Kidney (tissue), 22 donors: ENCODE measurements at regions of chr11 and their contacts with region 1.

Region 1: DNA sequence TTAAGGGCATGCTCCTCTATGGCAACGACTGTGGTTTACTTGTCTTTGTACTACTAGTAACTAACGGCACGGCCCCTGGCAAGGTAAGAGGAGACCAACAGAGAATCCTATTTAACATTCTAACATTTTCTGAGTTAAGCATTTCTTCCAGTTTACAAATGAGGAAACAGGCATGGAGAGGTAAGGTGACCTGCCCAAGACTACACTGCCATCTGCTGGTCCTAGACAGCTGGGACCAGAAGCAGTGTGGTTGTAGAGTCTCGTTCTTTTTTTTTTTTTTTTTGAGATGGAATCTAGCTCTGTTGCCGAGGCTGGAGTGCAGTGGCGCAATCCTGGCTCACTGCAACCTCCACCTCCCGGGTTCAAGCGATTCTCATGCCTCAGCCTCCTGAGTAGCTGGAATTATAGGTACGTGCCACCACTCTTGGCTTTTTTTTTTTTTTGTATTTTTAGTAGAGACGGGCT is 5.3 kb upstream of the RAPSN start:
- DNase-seq: peak; percentile 79 to 94 (median 85)
- H3K4me3 ChIP-seq: no peak overlapping the region
- H3K27ac ChIP-seq: no peak overlapping the region
- H3K4me1 ChIP-seq: no peaks in the 10 kb centered on the region
- H3K27me3 ChIP-seq: no peaks in the 10 kb centered on the region
- CTCF ChIP-seq: peak; percentile 88

Region 2: DNA sequence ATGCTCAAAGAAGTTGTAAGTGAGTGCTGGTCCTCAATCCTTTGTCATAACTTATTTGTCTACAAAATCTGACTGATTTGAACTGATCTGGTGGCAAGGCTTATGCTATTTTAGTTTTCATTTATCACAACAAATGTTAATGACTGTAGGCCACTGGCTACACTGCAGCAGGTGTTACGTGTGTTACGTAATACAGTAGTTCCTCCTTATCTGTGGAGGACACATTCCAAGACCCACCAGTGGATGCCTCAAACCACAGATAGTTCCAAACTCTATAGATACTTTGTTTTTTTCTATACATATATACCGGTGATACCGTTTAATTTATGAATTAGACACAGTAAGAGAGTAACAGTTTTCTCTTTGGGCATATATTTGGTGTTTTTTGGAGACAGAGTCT is 177.3 kb before region 1 on chr11:
- intact Hi-C with region 1: no loop called
- DNase-seq: no peak
- H3K4me3 ChIP-seq: no peak overlapping the region
- H3K27ac ChIP-seq: no peak overlapping the region
- H3K4me1 ChIP-seq: peaks cover 0 to 4% (median under 1%) of the 10 kb centered on the region in 3 donors
- H3K27me3 ChIP-seq: no peaks in the 10 kb centered on the region
- CTCF ChIP-seq: no peak

Region 3: DNA sequence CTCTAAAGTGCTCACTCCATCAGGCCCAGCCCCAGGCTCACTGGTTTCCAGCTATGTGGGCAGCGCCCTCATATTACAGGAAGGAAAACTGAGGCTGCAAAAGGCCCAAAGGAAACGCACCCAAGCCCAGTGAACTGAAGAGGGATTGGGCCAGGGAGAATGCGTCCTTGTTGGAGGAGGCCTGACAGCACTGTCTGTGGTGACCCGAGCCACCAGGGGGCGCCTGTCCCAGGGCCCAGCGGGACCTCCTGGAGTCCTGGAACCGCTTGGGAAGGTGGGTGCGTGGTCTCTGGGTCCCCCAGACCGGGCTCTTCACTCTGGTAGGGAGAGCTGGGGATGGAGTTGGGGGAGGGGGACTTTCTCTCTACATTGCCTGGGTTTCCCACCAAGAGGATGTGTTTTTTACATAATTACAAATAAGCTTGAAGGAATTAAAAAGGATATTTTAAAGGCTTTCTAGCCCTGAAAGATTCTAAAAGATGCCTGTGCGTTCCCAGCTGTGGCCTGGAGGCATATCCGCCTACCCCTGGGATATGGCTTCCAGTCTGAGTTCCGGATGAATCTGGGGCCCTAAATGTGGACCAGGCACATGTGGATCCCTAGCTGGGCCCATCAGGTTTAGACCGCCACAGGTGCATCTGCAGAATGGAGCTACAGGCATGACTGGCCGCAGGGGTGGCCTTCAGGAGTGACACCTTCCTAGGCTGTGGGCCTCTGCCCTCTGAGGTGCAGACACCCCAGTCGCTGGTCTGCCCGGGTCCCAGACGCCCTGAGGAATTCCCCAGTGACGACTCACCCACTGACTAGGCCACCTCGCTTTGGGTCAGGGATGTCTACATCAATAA is 80.1 kb before region 1 on chr11:
- intact Hi-C with region 1: loop called (anchors 10 kb)
- DNase-seq: peak; percentile 76 to 90 (median 84)
- H3K4me3 ChIP-seq: no peak overlapping the region
- H3K27ac ChIP-seq: no peak overlapping the region
- H3K4me1 ChIP-seq: peaks cover 0 to 3% (median 0%) of the 10 kb centered on the region in 3 donors
- H3K27me3 ChIP-seq: no peaks in the 10 kb centered on the region
- CTCF ChIP-seq: peak; percentile 89